IMR-90 (cell line): ENCODE measurements at regions of chr20 and their contacts with region 1.

Region 1: GRCh38 chr20:33862709-33863403 is 51.7 kb downstream of the CHMP4B start:
- DNase-seq: peak; percentile 78
- ATAC-seq: peak; percentile 94
- H3K4me3 ChIP-seq: no peak overlapping the region
- H3K27ac ChIP-seq: no peak overlapping the region
- H3K4me1 ChIP-seq: peaks cover 7% of the 10 kb centered on the region; the same call in 1 of the 2 replicates
- H3K27me3 ChIP-seq: no peaks in the 10 kb centered on the region
- CTCF ChIP-seq: peak; percentile 75
- POLR2A ChIP-seq: 0 out of 2 replicates have a peak, but pooled peaks have one; percentile 23
- RAD21 ChIP-seq: peak; percentile 89

Region 2: DNA sequence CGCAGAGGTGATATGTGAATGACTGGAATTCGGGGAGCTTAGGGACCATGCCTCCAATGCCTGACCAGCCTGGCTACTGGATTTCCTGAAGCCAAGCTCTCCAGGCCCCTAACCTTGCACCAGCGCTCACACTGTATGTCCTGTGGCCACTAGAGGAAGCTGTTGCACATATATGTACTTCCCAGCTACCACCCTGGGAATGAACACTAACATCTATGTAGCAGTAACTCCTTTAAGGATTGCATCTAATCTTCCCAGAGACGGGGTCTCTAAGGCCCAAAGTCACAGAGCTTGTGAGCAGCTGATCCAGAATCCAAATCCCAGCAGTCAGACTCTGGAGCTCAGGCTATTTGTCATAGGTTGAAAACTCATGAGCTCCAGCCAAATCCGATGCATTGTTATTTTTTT is 600.2 kb before region 1 on chr20:
- CTCF ChIA-PET with region 1: no interaction called
- POLR2A ChIA-PET with region 1: no interaction called
- dilution Hi-C with region 1: no loop called
- in situ Hi-C with region 1: no loop called
- intact Hi-C with region 1: no loop called
- DNase-seq: peak; percentile 53
- ATAC-seq: peak; percentile 93
- H3K4me3 ChIP-seq: no peak overlapping the region
- H3K27ac ChIP-seq: no peak overlapping the region
- H3K4me1 ChIP-seq: no peaks in the 10 kb centered on the region
- H3K27me3 ChIP-seq: peaks cover 3% of the 10 kb centered on the region; the same call in 1 of the 2 replicates
- CTCF ChIP-seq: peak; percentile 59
- POLR2A ChIP-seq: no peak
- RAD21 ChIP-seq: peak; percentile 46

Region 3: DNA sequence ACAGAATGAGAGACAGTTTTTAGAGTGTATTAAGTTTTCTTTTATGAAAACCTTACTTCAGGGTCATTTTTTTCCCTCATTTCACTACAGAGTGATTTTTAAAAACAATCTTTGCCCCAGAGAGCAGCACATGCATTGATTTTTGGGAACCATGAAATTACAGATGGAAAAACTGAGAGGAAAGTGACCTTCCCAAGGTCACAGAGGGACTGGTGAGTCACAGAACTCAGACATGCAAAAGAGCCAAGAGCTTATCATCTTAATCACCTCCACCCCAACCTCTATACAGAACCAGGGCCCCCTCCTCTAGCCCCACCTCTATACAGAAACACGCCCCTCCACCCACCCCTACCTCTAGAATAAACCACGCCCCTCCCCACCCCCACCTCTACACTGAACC is 153.5 kb before region 1 on chr20:
- CTCF ChIA-PET with region 1: no interaction called
- POLR2A ChIA-PET with region 1: no interaction called
- dilution Hi-C with region 1: no loop called
- in situ Hi-C with region 1: no loop called
- intact Hi-C with region 1: no loop called
- DNase-seq: no peak
- ATAC-seq: peak; percentile 48; the same call in 1 of the 2 replicates
- H3K4me3 ChIP-seq: no peak overlapping the region
- H3K27ac ChIP-seq: no peak overlapping the region
- H3K4me1 ChIP-seq: no peaks in the 10 kb centered on the region
- H3K27me3 ChIP-seq: no peaks in the 10 kb centered on the region
- CTCF ChIP-seq: no peak
- POLR2A ChIP-seq: no peak
- RAD21 ChIP-seq: no peak

Region 4: GRCh38 chr20:33992923-33993575 is 130.2 kb after region 1 on chr20:
- CTCF ChIA-PET with region 1: interaction called, 6 read pairs
- POLR2A ChIA-PET with region 1: no interaction called
- dilution Hi-C with region 1: no loop called
- in situ Hi-C with region 1: no loop called
- intact Hi-C with region 1: loop called (anchors 2 kb)
- DNase-seq: peak; percentile 99
- ATAC-seq: peak; percentile 84
- H3K4me3 ChIP-seq: peak overlapping the region; percentile 88
- H3K27ac ChIP-seq: peak overlapping the region; percentile 95
- H3K4me1 ChIP-seq: peaks cover 8% of the 10 kb centered on the region
- H3K27me3 ChIP-seq: no peaks in the 10 kb centered on the region
- CTCF ChIP-seq: no peak
- POLR2A ChIP-seq: peak; percentile 88
- RAD21 ChIP-seq: no peak

Region 5: DNA sequence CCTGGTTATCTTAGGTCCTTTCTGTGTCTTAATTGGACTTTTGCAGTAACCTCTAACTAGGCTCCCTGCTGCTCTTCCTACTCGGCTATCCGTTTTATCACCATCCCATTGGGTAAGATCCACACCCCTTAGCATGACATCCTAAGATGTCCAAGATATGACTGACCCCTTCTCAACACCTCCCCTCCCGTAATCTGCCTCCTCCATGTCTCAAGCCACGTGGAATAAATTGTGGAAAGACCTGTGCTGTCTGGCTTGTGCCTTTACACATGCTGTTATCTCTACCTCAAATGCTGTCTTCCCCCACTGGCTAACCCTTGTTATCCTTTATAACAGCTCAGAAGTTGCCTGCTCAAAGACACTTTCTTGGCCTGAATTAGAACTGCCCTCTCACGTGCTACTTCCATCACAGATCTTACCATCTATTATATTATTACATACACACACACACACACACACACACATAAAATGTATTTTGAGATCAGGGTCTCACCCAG is 222.7 kb after region 1 on chr20:
- CTCF ChIA-PET with region 1: interaction called, 3 read pairs
- POLR2A ChIA-PET with region 1: no interaction called
- dilution Hi-C with region 1: no loop called
- in situ Hi-C with region 1: no loop called
- intact Hi-C with region 1: loop called (anchors 1 kb)
- DNase-seq: no peak
- ATAC-seq: no peak
- H3K4me3 ChIP-seq: no peak overlapping the region
- H3K27ac ChIP-seq: no peak overlapping the region
- H3K4me1 ChIP-seq: no peaks in the 10 kb centered on the region
- H3K27me3 ChIP-seq: no peaks in the 10 kb centered on the region
- CTCF ChIP-seq: no peak
- POLR2A ChIP-seq: no peak
- RAD21 ChIP-seq: no peak